ENCODE measurements at regions of chr3 and their contacts with region 1.

Region 1: DNA sequence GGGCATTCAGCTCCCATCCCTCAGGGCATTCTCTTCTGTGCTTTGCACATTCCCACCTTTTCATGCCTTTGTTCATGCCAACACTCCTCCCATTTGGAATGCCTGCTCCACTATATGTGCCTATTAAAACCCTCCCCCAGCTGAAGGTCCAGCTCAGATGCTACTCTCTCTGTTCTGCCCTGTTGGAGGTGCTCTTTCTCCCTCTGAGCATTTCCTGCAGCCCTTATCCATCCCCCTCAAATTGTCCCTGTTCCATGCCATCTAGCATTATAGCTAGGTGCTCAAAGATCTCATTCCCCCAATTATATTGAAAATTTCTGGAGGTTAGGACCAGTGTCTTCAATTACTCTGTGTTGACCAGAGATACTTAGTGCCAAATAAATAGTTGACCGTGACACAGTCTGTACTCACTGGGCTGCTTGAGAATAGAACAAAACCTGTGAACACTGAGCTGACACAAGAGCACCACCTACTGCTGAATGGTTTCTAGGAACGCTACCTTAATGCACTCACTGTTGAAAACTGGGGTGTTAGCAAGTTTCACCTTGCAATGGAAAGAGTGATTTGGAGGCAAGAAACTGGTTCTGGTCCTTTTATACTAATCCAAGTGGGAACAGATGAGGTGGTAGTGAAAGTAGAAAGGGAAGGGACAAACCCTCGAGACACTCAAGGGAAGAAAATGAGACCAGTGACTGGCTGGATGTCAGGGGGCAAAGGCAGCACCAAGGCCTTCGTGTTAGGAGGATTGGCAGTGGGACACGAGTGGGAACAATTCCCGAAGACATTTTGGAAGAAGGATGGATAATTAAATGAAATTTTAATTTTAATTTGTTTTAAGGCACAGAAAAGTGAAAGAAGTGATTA is 289.8 kb upstream of the ROPN1 start:
- DNase-seq: no peak
- ATAC-seq: peak; percentile 69

Region 2: DNA sequence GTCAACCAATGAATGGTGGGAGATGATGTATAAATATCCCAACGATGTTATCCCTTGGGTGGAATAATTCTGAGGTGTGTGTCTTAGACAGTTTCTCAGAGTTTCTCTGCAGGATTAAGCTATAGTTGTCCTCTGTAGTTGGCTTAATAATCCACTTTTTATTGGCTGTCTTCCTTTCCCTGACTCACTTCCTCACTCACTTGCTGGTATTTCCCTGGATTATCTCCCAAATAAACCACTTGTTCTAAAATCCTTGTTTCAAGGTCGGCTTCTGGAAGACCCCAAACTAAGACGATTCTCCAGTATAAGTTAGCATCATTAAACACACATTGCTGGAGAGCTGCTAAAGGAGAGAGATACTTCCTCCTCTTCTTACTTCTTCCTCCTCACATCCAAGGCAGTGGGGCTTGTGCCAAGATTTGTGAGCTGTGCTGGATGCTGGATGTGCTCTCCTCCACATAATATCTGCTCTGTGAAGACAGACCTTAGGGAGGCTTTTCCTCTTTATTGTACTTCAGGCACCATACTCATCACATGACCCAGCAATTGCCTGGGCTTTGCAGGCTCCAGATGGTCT is 267.2 kb before region 1 on chr3:
- intact Hi-C with region 1: loop called (anchors 5 kb)
- DNase-seq: no peak
- ATAC-seq: no peak

Region 3: DNA sequence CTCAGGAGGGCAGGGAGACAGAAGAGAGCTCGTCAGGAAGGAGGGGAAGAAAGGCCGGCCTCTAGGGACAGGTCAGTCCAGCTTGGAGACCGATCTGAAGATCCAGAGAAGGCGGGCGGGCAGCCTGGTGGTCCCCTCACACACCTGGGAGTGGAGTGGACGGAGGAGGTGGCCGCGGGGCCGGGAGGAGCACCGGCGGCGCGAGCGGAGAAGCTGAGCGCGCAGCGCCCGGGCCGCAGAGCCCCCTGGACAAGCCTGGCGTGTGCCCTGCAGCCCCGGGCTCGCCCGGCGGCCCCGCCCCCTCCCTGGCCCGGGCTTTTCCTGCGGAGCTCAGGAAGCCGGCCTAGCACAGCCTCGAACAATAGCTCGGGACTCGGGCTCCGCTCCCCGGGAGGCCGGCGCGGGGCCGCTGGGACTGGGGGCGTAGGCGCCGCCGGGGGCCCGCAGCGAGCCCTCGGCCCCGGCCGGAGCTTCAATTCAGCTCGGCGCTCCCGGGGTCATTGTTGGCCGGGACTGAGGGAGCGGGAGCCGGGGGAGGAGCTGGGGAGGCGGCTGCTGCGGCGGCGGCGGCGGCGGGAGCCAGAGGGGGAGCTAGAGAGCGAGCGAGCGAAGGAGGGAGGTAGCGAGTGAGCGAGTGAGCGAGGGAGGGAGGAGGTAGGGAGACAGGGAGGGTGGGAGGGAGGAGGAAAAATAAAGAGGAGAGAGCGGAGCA is 248.9 kb before region 1 on chr3:
- intact Hi-C with region 1: loop called (anchors 5 kb)
- DNase-seq: peak; percentile 90
- ATAC-seq: peak; percentile 96

Region 4: GRCh38 chr3:124084022-124084881 is 197.4 kb before region 1 on chr3:
- intact Hi-C with region 1: loop called (anchors 5 kb)
- DNase-seq: no peak
- ATAC-seq: peak; percentile 65

Region 5: DNA sequence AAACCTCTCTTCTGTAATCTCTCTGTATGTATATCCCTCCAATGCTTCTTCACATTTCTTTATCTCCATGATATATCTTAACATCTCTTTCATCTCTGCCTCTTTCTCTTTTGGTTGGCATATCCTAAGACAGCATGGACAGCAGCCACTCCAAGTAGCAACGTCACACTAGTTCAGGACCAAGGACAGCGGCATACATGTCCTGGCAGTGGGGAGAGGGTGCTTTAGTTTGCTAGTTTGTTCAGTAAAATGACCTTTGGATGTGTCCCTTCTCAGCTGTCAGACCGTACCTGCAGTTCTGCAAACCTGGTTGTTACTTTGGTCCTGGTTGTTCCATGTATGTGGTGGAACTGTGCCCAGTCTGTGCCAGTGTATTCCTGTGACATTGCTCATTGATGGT is 64.1 kb before region 1 on chr3:
- intact Hi-C with region 1: no loop called
- DNase-seq: peak; percentile 30
- ATAC-seq: peak; percentile 66

Region 6: GRCh38 chr3:124351430-124352148 is 69.9 kb after region 1 on chr3:
- intact Hi-C with region 1: no loop called
- DNase-seq: no peak
- ATAC-seq: peak; percentile 73